ENCODE measurements at regions of chr4 and their contacts with region 1.

Region 1: GRCh38 chr4:173698557-173699262 is 168.7 kb upstream of the HAND2 start:
- DNase-seq: peak; percentile 66 to 83 (median 70)
- ATAC-seq: peak; percentile 88 to 94 (median 92)
- H3K4me3 ChIP-seq: peak overlapping the region in 9 of 12 donors; percentile 23 to 50 (median 34)
- H3K27ac ChIP-seq: peak overlapping the region; percentile 43 to 93 (median 74)
- H3K4me1 ChIP-seq: peaks cover 0 to 7% (median 0%) of the 10 kb centered on the region in 12 donors
- H3K27me3 ChIP-seq: no peaks in the 10 kb centered on the region
- CTCF ChIP-seq: no peak
- POLR2A ChIP-seq: peak in 1 of 2 donors; percentile 33

Region 2: DNA sequence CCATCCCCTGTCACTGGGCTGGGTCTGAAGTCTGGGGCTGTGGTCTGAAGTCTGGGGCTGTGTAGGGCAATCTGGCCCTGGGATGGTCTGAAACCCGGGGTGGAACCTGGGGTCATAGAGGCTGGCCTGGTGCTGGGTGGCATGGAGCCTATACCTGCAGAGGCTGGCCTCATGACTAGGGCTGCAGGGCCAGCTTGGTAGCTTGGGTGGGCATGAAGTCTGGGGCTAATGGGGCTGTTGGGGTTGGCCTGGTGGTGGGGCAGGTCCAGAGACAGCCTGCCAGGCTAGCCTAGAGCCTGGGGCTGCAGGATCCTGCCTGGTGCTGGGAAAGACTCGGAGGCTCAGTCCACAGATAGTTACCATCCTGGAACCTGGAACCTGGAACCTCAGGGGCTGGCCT is 493.1 kb before region 1 on chr4:
- intact Hi-C with region 1: no loop called
- DNase-seq: no peak
- ATAC-seq: no peak
- H3K4me3 ChIP-seq: no peak overlapping the region
- H3K27ac ChIP-seq: no peak overlapping the region
- H3K4me1 ChIP-seq: no peaks in the 10 kb centered on the region
- H3K27me3 ChIP-seq: no peaks in the 10 kb centered on the region
- CTCF ChIP-seq: no peak
- POLR2A ChIP-seq: no peak

Region 3: GRCh38 chr4:173529477-173530325 is 169.0 kb before region 1 on chr4 and contains the start of gene HAND2:
- intact Hi-C with region 1: loop called in 2 of 10 experiments (anchors 5 kb)
- DNase-seq: peak; percentile 82 to 92 (median 87)
- ATAC-seq: peak; percentile 70 to 76 (median 74)
- H3K4me3 ChIP-seq: peak within 1 kb of the TSS; percentile 60 to 95 (median 82)
- H3K27ac ChIP-seq: peak within 1 kb of the TSS; percentile 83 to 99 (median 96)
- H3K4me1 ChIP-seq: peaks cover 0 to 7% (median 1%) of the 10 kb centered on the region in 12 donors
- H3K27me3 ChIP-seq: peaks cover 0 to 96% (median 11%) of the 10 kb centered on the region in 9 donors
- CTCF ChIP-seq: no peak
- POLR2A ChIP-seq: peak; percentile 87 to 97
- total RNA-seq, gene HAND2: 89.3 to 188 (median 129) TPM

Region 4: GRCh38 chr4:173538148-173538908 is 160.4 kb before region 1 on chr4:
- intact Hi-C with region 1: loop called in 3 of 10 experiments (anchors 5 kb)
- DNase-seq: peak; percentile 60 to 84 (median 70)
- ATAC-seq: peak; percentile 68 to 80 (median 76)
- H3K4me3 ChIP-seq: peak overlapping the region; percentile 25 to 85 (median 54)
- H3K27ac ChIP-seq: peak overlapping the region; percentile 72 to 99 (median 92)
- H3K4me1 ChIP-seq: peaks cover 0 to 40% (median 15%) of the 10 kb centered on the region in 12 donors
- H3K27me3 ChIP-seq: peaks cover 0 to 84% (median 3%) of the 10 kb centered on the region in 9 donors
- CTCF ChIP-seq: no peak
- POLR2A ChIP-seq: no peak

Region 5: DNA sequence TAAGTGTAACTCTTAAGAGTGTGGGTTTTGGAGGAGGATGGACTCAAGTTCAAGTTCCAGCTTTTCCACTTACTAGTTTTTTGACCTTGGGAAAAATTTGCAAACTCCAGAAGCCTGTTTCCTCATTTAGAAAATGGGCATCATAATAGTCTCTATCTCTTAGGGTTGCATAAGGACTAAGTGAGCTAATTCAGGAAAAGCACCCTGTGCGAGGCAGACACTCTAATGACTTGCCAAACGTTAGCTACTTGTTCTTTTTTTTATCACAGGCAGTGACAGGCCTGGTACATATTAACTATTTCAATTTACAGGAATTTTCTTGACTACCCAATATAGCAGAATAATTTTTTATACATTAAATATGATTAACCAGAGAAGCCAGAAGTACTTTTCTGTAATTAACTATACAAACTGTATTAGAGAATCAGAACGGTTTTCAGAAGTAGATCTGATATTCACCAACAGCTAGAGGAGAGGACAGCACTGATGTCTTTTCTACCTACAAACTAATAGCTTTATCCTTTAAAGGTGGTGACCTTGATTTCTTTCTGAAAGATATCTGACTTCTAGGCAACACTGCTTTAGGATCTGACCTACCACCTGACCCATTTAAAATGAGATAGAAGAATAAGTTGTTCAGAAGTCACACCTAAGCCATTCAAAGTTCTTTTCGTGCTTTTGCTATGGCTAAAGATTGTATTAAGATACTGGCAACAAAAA is 29.1 kb before region 1 on chr4:
- intact Hi-C with region 1: loop called in 1 of 10 experiments (anchors 1 kb)
- DNase-seq: peak in 3 of 5 donors; percentile 27 to 48 (median 42)
- ATAC-seq: peak; percentile 96 to 98 (median 97)
- H3K4me3 ChIP-seq: no peak overlapping the region
- H3K27ac ChIP-seq: peak overlapping the region; percentile 41 to 93 (median 83)
- H3K4me1 ChIP-seq: peaks cover 0 to 4% (median 0%) of the 10 kb centered on the region in 12 donors
- H3K27me3 ChIP-seq: no peaks in the 10 kb centered on the region
- CTCF ChIP-seq: no peak
- POLR2A ChIP-seq: no peak

Region 6: DNA sequence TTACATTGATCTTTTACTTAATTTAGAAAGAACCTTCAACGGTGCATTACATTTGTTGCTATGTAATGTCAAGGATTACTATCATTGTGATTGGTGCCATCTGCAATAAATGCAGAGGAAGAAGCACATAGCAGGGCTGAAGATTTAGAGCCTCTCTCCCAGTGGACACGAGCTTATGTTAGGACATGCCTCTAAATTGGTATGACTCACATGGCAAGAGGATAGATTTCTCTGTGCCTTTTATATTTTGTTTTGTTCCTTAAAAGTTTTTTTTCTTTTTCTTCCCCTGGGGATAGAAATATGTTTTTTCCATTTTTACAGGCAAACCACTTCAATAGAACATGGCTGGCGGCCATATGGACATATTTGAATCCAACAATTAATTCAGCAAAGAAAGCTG is 36.3 kb after region 1 on chr4:
- intact Hi-C with region 1: loop called in 2 of 10 experiments (anchors 5 kb)
- DNase-seq: no peak
- ATAC-seq: no peak
- H3K4me3 ChIP-seq: no peak overlapping the region
- H3K27ac ChIP-seq: no peak overlapping the region
- H3K4me1 ChIP-seq: peaks cover 0 to 16% (median 5%) of the 10 kb centered on the region in 12 donors
- H3K27me3 ChIP-seq: no peaks in the 10 kb centered on the region
- CTCF ChIP-seq: no peak
- POLR2A ChIP-seq: no peak